CD4-positive, alpha-beta T cell (primary cell): ENCODE measurements at regions of chr13 and their contacts with region 1.

Region 1: DNA sequence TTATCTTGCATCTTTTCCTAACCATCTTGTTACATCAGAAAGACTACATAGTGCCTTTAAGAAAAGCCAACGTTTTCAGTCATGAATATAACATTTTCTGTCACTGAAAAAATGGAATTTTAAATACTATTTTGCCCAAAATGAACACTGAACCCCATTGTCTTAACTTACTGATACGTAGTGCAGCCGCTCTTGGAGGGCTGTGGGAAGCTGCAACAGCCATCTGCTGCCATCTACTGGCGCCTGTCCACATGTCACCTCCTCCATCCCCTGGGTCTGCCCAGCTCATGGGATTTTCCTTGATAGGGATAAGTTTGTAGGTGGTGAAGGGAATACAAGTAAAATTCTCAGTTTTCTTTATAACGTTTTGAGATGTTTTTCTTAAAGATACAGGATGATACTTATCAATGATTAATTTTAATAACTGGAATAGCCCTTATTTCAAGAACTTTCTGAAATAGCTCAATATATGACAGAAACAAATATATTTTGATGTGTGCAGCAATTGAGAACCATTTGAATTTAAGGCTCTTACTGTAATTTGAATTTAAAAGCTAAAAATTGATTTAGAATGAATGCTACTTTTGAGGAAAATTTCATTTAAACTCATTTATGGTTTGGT is 73.7 kb downstream of the GGACT start:
- DNase-seq: peak; percentile 57 to 85 (median 66)
- ATAC-seq: peak; percentile 95
- H3K4me3 ChIP-seq: no peak overlapping the region
- H3K4me3 Mint-ChIP-seq: no peak overlapping the region
- H3K27ac ChIP-seq: no peak overlapping the region
- H3K27ac Mint-ChIP-seq: no peak overlapping the region
- H3K4me1 ChIP-seq: peaks cover 12% of the 10 kb centered on the region
- H3K4me1 Mint-ChIP-seq: peaks cover 19% of the 10 kb centered on the region
- H3K27me3 ChIP-seq: no peaks in the 10 kb centered on the region
- H3K27me3 Mint-ChIP-seq: no peaks in the 10 kb centered on the region
- CTCF ChIP-seq: peak; percentile 100

Region 2: DNA sequence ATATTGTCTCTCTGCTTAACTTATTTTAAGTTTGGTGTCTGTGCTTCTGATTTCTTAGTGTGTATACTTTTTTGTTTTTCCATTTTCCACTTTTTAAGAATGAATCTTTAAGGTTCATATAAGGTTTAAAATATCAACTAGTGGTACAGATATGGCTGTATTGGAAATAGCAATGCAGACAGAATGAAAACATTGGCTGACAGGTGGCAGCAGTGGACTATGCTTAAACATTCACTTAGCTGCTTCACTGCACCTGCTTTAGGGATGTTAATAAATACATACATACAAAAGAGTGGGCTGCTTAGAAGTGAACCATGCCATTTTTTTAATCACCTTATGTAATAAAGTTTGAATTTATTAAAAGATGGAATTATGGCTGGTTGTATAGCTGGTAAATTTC is 986.4 kb before region 1 on chr13:
- CTCF ChIA-PET with region 1: interaction called, 3 read pairs
- POLR2A ChIA-PET with region 1: no interaction called
- intact Hi-C with region 1: loop called in 1 of 2 experiments (anchors 10 kb)
- DNase-seq: peak in 12 of 14 experiments; percentile 10 to 68 (median 30)
- ATAC-seq: peak; percentile 74
- H3K4me3 ChIP-seq: no peak overlapping the region
- H3K4me3 Mint-ChIP-seq: no peak overlapping the region
- H3K27ac ChIP-seq: no peak overlapping the region
- H3K27ac Mint-ChIP-seq: no peak overlapping the region
- H3K4me1 ChIP-seq: peaks cover 24% of the 10 kb centered on the region
- H3K4me1 Mint-ChIP-seq: peaks cover 62% of the 10 kb centered on the region
- H3K27me3 ChIP-seq: no peaks in the 10 kb centered on the region
- H3K27me3 Mint-ChIP-seq: no peaks in the 10 kb centered on the region
- CTCF ChIP-seq: peak; percentile 63

Region 3: GRCh38 chr13:99916366-99917103 is 598.4 kb before region 1 on chr13:
- CTCF ChIA-PET with region 1: interaction called, 3 read pairs
- POLR2A ChIA-PET with region 1: no interaction called
- intact Hi-C with region 1: loop called (anchors 1 kb)
- DNase-seq: peak in 3 of 14 experiments; percentile 64 to 74 (median 73)
- ATAC-seq: peak; percentile 83
- H3K4me3 ChIP-seq: no peak overlapping the region
- H3K4me3 Mint-ChIP-seq: no peak overlapping the region
- H3K27ac ChIP-seq: no peak overlapping the region
- H3K27ac Mint-ChIP-seq: no peak overlapping the region
- H3K4me1 ChIP-seq: peaks cover 21% of the 10 kb centered on the region
- H3K4me1 Mint-ChIP-seq: peaks cover 8% of the 10 kb centered on the region
- H3K27me3 ChIP-seq: no peaks in the 10 kb centered on the region
- H3K27me3 Mint-ChIP-seq: peaks cover 16% of the 10 kb centered on the region
- CTCF ChIP-seq: peak; percentile 95

Region 4: GRCh38 chr13:100235311-100235901 is 279.5 kb before region 1 on chr13:
- CTCF ChIA-PET with region 1: interaction called, 3 read pairs
- POLR2A ChIA-PET with region 1: no interaction called
- intact Hi-C with region 1: loop called in 1 of 2 experiments (anchors 5 kb)
- DNase-seq: peak in 4 of 14 experiments; percentile 27 to 67 (median 65)
- ATAC-seq: no peak
- H3K4me3 ChIP-seq: no peak overlapping the region
- H3K4me3 Mint-ChIP-seq: no peak overlapping the region
- H3K27ac ChIP-seq: no peak overlapping the region
- H3K27ac Mint-ChIP-seq: no peak overlapping the region
- H3K4me1 ChIP-seq: peaks cover 4% of the 10 kb centered on the region
- H3K4me1 Mint-ChIP-seq: no peaks in the 10 kb centered on the region
- H3K27me3 ChIP-seq: no peaks in the 10 kb centered on the region
- H3K27me3 Mint-ChIP-seq: no peaks in the 10 kb centered on the region
- CTCF ChIP-seq: peak; percentile 85